Ovary (tissue), 10 donors: ENCODE measurements at regions of chr2 and their contacts with region 1.

Region 1: DNA sequence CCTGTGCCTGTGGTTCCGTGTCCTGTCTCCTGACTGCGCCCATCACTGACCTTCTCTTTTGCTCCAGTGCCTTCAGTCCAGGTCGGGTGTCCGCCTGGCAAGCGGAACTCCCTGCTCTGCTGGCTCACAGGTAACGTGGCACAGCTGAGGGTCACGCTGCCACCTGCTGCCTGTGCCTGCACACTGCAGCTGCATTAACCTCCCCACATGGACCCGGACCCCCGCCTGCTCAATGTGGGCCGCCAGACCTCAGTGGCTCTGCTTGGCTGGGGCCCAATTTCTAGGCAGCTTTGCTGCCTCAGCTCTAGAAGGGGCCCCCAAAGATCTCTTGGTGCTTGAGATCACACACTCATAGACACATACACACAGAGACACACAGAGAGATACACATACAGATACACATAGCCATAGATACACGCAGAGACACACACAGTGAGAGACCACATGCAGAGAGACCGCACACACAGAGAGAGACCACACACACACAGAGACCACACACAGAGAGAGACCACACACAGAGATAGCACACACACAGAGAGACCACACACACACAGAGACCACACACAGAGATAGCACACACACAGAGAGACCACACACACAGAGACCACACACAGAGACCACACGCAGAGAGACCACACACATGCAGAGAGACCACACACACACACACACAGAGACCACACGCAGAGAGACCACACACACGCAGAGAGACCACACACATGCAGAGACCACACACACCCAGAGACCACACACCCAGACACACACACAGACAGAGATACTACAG is 14.9 kb upstream of the CNNM3 start:
- DNase-seq: peak; percentile 66 to 79 (median 72)
- H3K4me3 ChIP-seq: no peak overlapping the region
- H3K27ac ChIP-seq: no peak overlapping the region
- H3K4me1 ChIP-seq: no peaks in the 10 kb centered on the region
- H3K27me3 ChIP-seq: no peaks in the 10 kb centered on the region
- CTCF ChIP-seq: peak; percentile 43 to 60 (median 58)
- EP300 ChIP-seq: no peak
- POLR2A ChIP-seq: no peak

Region 2: GRCh38 chr2:96536445-96537065 is 264.6 kb before region 1 on chr2 and contains the start of gene ARID5A:
- intact Hi-C with region 1: loop called in 1 of 4 experiments (anchors 5 kb)
- DNase-seq: peak; percentile 92 to 96 (median 95)
- H3K4me3 ChIP-seq: peak within 1 kb of the TSS; percentile 72
- H3K27ac ChIP-seq: peak within 1 kb of the TSS; percentile 99
- H3K4me1 ChIP-seq: peaks cover 13% of the 10 kb centered on the region
- H3K27me3 ChIP-seq: no peaks in the 10 kb centered on the region
- CTCF ChIP-seq: peak; percentile 16 to 71 (median 57)
- EP300 ChIP-seq: no peak
- POLR2A ChIP-seq: peak; percentile 97
- total RNA-seq, gene ARID5A: 11.7 to 46.1 (median 17.1) TPM